ENCODE measurements at regions of chr1 and their contacts with region 1.

Region 1: GRCh38 chr1:22749919-22750688 is 39.5 kb downstream of the EPHB2 start:
- DNase-seq: peak; percentile 95
- H3K4me3 ChIP-seq: no peak overlapping the region
- H3K27ac ChIP-seq: peak overlapping the region; percentile 90
- H3K4me1 ChIP-seq: peaks cover 78% of the 10 kb centered on the region
- H3K27me3 ChIP-seq: no peaks in the 10 kb centered on the region
- CTCF ChIP-seq: no peak
- POLR2A ChIP-seq: peak; percentile 68

Region 2: DNA sequence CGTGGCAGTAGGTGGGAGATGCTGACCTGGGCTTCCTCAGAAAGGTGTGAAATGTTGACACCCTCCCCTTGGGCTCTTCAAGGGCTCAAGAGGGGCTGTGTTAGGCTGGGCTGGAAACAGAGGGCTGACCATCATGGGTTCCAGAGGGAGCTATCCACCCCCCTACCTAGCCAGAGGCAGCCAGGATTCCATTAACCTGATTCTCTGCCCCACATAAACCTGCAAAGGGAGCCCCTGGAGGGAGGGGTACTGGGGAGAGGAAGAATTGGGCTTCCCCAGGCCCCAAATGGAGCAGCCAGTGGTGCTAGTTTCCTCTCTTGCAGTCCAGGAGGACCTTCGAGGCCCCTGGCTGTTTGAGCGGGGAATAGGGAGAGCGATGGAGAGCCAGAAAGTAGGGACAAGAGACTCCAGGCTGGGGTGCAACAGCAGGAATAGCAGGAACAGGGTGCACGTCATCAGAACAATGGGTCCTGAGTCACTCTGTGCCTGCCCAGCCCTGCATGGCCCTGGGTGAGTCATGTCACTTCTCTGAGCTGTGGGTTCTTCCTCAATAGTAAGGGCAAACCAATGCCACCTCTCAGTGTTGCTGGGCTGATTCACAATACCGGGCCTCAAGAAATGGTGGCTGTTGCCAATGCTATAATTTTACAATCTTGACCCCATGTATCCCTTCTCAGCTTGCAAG is 81.8 kb after region 1 on chr1:
- CTCF ChIA-PET with region 1: interaction called, 3 read pairs
- POLR2A ChIA-PET with region 1: no interaction called
- dilution Hi-C with region 1: no loop called
- intact Hi-C with region 1: loop called (anchors 5 kb)
- DNase-seq: peak; percentile 92
- H3K4me3 ChIP-seq: no peak overlapping the region
- H3K27ac ChIP-seq: peak overlapping the region; percentile 78
- H3K4me1 ChIP-seq: peaks cover 26% of the 10 kb centered on the region
- H3K27me3 ChIP-seq: no peaks in the 10 kb centered on the region
- CTCF ChIP-seq: no peak
- POLR2A ChIP-seq: no peak

Measured in endothelial cell of umbilical vein (primary cell).